ENCODE measurements at regions of chr11 and their contacts with region 1.

Region 1: DNA sequence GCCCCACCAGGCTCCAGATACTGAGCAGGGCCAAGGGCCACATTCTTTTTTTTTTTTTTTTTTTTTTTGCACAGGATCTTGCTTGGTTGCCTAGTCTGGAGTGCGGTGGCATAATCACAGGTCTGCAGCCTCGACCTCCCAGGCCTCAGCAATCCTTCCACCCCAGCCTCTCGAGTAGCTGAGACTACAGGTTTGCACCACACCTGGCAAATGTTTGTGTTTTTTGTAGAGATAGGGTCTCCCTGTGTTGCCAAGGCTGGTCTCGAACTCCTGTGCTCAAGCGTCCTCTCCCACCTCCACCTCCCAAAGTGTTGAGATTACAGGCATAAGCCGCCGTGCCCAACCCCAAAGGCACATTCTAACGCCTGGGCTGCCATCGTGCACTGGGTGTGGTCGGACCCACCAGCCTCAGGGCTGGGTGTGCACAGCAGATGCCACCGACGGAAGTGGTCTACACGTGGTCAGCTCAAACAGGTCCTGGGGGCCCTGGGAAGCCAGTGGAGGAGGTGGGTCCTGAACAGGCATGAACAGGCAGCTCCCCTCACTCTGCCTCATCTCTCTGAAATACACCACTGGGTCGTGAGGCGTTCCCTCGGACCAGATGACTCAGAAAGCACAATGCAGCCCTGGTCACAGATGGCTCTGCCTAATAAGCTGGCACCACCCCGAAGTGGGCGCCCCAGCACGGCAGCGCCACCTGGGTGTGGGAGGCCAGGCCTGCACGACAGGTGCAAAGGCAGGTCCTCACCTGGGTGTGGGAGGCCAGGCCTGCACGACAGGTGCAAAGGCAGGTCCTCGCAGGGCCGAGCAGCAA is 5.1 kb upstream of the B4GALNT4 start:
- DNase-seq: peak; percentile 88
- H3K4me3 Mint-ChIP-seq: peak overlapping the region; percentile 35
- H3K27ac Mint-ChIP-seq: peak overlapping the region; percentile 13
- H3K4me1 Mint-ChIP-seq: peaks cover 17% of the 10 kb centered on the region
- H3K27me3 Mint-ChIP-seq: peaks cover 24% of the 10 kb centered on the region
- CTCF ChIP-seq: peak; percentile 81

Region 2: GRCh38 chr11:236774-237767 is 127.1 kb before region 1 on chr11 and contains the start of gene PSMD13:
- CTCF ChIA-PET with region 1: interaction called, 5 read pairs
- POLR2A ChIA-PET with region 1: interaction called, 10 read pairs
- intact Hi-C with region 1: no loop called
- DNase-seq: peak; percentile 76
- H3K4me3 Mint-ChIP-seq: peak within 1 kb of the TSS; percentile 79
- H3K27ac Mint-ChIP-seq: peak within 1 kb of the TSS; percentile 96
- H3K4me1 Mint-ChIP-seq: peaks cover 24% of the 10 kb centered on the region
- H3K27me3 Mint-ChIP-seq: no peaks in the 10 kb centered on the region
- CTCF ChIP-seq: no peak
- total RNA-seq, gene PSMD13: 86.8 and 103 TPM in 2 replicates

Region 3: GRCh38 chr11:244376-244775 is 119.8 kb before region 1 on chr11:
- CTCF ChIA-PET with region 1: interaction called, 11 read pairs
- POLR2A ChIA-PET with region 1: no interaction called
- intact Hi-C with region 1: no loop called
- DNase-seq: no peak
- H3K4me3 Mint-ChIP-seq: no peak overlapping the region
- H3K27ac Mint-ChIP-seq: no peak overlapping the region
- H3K4me1 Mint-ChIP-seq: peaks cover 6% of the 10 kb centered on the region
- H3K27me3 Mint-ChIP-seq: no peaks in the 10 kb centered on the region
- CTCF ChIP-seq: no peak

Region 4: DNA sequence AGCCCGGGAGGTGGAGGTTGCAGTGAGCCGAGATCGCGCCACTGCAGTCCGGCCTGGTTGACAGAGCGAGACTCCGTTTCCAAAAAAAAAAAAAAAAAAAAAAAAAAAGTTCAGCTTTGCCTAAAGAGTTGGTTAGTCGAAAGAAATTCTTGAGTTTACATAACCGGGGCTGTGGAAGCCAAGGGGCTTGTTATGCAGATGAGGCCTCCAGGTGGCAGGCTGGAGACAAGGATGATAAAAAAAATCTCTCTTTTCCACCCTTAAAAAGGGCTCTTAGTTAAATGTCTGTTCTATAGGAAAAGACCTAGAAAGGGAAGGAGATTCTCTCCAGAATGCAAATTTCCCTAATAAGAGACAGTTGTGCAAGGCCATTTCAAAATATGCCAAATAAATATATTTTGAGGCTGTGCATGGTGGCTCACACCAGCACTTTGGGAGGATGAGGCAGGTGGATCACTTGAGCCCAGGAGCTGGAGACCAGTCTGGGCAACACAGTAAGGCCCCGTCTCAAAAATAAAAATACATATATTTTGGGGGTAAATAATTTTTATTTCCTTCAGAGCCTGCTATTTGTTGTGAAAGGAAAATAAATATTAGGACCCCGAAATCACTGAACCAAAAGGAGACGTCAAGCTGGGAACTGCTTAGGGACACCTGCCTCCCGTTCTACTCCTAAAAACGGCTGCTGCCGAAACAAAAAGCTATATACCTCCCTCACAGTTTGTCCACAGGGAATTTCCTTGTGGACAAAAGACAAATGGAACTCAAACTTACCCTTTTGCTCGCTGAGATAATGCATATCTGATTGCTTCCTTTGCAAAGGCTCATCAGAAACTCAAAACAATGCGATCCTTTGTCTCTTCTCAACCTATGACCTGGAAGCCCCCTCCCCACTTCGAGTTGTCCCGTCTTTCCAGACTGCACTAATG is 59.0 kb before region 1 on chr11:
- CTCF ChIA-PET with region 1: interaction called, 68 read pairs
- POLR2A ChIA-PET with region 1: interaction called, 3 read pairs
- intact Hi-C with region 1: no loop called
- DNase-seq: peak; percentile 74
- H3K4me3 Mint-ChIP-seq: no peak overlapping the region
- H3K27ac Mint-ChIP-seq: no peak overlapping the region
- H3K4me1 Mint-ChIP-seq: peaks cover 20% of the 10 kb centered on the region
- H3K27me3 Mint-ChIP-seq: no peaks in the 10 kb centered on the region
- CTCF ChIP-seq: peak; percentile 58